ENCODE measurements at regions of chr16 and their contacts with region 1.

Region 1: GRCh38 chr16:17578921-17579874 is 108.4 kb upstream of the XYLT1 start:
- DNase-seq: peak; percentile 53
- H3K4me3 ChIP-seq: no peak overlapping the region
- H3K27ac ChIP-seq: no peak overlapping the region
- H3K4me1 ChIP-seq: no peaks in the 10 kb centered on the region
- H3K27me3 ChIP-seq: no peaks in the 10 kb centered on the region
- CTCF ChIP-seq: peak; percentile 33 to 75 (median 57)
- POLR2A ChIP-seq: no peak

Region 2: GRCh38 chr16:17238284-17239028 is 340.7 kb before region 1 on chr16:
- intact Hi-C with region 1: loop called (anchors 10 kb)
- DNase-seq: no peak
- H3K4me3 ChIP-seq: no peak overlapping the region
- H3K27ac ChIP-seq: no peak overlapping the region
- H3K4me1 ChIP-seq: no peaks in the 10 kb centered on the region
- H3K27me3 ChIP-seq: no peaks in the 10 kb centered on the region
- CTCF ChIP-seq: no peak
- POLR2A ChIP-seq: no peak

Region 3: DNA sequence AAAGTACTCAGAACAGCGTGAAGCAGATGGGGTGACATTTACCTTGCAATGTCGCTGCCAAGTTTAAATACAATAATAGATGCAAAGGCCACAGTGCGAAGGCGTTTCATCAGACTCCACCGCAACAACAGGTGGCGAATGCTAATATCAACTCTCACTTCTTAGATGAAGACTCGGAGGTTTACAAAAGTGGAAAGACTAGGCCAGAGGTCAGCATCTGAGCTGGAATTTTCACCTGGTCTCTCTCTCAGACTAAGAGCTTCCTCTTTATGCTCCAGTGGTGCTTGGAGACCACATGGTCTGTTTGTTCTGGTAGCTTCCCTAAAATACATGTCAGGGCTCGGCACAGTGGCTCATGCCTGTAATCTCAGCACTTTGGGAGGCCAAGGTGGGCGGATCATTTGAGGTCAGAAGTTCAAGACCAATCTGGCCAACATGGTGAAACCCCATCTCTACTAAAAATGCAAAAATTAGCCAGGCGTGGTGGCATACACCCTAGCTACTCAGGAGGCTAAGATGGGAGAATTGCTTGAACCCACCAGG is 277.5 kb before region 1 on chr16:
- intact Hi-C with region 1: no loop called
- DNase-seq: no peak
- H3K4me3 ChIP-seq: no peak overlapping the region
- H3K27ac ChIP-seq: no peak overlapping the region
- H3K4me1 ChIP-seq: peaks cover 19% of the 10 kb centered on the region
- H3K27me3 ChIP-seq: no peaks in the 10 kb centered on the region
- CTCF ChIP-seq: no peak
- POLR2A ChIP-seq: no peak

Region 4: GRCh38 chr16:17483351-17483750 is 95.8 kb before region 1 on chr16:
- intact Hi-C with region 1: loop called (anchors 5 kb)
- DNase-seq: no peak
- H3K4me3 ChIP-seq: no peak overlapping the region
- H3K27ac ChIP-seq: no peak overlapping the region
- H3K4me1 ChIP-seq: no peaks in the 10 kb centered on the region
- H3K27me3 ChIP-seq: no peaks in the 10 kb centered on the region
- CTCF ChIP-seq: no peak
- POLR2A ChIP-seq: no peak

Region 5: DNA sequence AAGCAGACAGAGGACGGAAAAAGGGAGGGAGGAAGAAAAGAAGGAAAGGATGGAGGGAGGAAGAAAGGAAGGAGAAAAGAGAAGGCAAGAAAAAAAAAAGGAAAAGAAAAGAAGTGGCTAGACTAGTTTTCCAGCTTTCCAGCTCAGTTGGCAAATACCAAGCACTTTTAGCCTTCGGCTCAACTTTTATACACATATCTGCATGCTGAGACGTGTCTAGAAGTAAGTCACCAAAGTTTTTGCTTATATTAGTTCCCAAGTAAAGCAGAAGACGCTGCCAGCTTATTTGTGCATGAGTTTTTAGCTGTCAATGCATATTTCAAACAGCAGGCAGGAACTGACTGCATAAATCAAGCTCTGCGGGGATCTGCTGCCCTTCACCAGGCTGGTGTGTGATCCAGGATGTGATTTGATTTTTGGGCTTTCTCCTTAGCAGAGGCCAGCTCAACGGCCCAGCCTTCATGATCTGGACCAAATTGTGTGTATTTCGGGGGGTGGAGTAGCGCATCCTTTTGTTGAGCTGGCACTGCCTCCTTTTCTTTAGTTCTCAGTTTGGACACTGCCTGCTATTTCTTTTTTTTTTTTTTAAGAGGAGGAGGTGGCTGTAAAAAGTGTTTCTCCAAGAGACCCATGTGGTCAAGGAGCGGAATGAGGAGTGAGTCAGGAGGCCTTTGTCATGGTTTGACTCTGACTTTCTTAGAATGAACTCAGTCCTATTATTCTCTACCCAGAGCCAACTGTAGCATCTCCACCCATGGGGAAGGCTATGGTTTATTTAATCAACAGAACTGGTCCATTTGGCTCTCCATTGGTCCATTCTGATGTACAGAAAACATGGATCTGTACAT is 54.1 kb after region 1 on chr16:
- intact Hi-C with region 1: no loop called
- DNase-seq: peak; percentile 75
- H3K4me3 ChIP-seq: no peak overlapping the region
- H3K27ac ChIP-seq: peak overlapping the region in 1 of 2 donors; percentile 23
- H3K4me1 ChIP-seq: no peaks in the 10 kb centered on the region
- H3K27me3 ChIP-seq: no peaks in the 10 kb centered on the region
- CTCF ChIP-seq: no peak
- POLR2A ChIP-seq: no peak

Measured in prostate gland (tissue), 2 donors.